Posterior cingulate gyrus (tissue), 11 donors: ENCODE measurements at regions of chr10 and their contacts with region 1.

Region 1: DNA sequence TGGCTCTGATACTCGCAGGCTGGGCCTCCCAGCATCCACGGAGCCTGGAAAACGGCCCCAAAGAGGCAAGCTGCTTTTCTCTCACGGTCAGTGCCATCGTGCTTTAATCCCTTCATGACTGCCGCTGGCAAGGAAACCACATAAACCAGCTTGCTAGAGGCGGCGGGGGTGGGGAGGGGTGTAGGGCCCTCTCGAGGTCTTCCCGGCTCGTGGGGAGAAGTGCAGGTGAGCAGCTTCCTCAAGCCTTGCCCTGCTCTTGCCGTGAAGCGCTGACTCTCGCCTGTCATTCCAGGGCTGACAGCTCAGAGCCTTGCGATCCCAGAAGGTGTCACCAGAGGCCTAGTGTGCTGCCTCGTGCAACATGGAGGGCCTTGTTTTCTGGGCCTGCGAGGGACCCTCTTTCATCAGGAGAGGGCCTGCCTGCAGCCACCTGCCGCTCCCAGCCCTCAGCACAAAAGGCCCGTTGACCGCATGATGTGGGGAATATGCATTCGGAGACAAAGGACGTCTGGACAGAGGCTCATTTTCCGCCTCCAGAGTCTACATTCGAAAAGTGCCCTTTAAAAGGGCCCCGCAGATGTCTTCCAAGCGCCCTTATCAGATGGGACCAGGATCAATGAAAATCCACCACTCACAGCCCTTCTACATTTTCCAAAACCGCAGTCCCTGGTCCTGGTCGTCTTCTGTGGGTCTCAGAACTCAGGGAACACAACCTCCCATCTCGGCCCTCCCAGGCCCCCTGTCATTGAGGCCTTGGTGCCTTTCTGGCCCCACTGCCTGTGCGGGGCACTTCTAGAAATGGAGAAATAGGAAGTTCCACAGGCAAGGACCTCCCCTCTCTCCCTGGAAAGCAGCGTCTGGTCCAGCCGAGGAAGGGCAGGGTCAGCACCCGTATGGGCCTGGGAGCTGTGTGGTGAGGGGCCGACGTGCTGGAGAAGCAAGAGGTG is 58.7 kb downstream of the ZRANB1 start:
- DNase-seq: peak in 8 of 10 donors; percentile 36 to 93 (median 64)

Region 2: DNA sequence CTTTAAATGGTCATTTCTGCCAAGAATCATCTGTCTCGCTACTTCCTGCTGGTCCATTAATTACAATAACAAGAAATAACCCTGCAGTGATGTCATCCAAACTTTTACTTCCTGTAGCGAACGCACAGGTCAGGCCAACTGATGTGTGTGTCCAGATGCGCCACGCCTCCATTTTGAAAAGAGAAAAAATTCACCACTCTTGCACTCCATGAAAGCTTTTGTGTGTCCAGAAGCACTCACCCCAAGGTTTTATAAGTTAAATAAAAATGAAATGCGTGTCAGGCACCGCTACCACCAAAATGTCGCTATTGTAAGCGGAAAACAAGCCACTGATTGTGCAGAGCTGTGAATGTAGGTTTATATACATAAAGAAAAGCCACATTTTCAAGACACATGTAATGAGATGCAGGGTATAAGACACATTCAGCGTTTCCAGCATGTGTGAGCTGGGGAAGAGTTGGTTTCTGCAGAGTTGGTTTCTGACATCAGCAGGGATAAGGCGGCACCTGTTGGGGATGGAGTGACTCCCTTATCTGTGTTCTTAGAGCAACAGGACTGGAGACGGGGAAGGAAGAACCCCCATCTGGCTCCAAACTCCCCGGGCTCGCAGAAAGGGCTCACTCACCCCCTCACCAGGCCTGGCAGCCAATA is 76.4 kb after region 1 on chr10:
- intact Hi-C with region 1: no loop called
- DNase-seq: peak in 1 of 10 donors; percentile 39

Region 3: DNA sequence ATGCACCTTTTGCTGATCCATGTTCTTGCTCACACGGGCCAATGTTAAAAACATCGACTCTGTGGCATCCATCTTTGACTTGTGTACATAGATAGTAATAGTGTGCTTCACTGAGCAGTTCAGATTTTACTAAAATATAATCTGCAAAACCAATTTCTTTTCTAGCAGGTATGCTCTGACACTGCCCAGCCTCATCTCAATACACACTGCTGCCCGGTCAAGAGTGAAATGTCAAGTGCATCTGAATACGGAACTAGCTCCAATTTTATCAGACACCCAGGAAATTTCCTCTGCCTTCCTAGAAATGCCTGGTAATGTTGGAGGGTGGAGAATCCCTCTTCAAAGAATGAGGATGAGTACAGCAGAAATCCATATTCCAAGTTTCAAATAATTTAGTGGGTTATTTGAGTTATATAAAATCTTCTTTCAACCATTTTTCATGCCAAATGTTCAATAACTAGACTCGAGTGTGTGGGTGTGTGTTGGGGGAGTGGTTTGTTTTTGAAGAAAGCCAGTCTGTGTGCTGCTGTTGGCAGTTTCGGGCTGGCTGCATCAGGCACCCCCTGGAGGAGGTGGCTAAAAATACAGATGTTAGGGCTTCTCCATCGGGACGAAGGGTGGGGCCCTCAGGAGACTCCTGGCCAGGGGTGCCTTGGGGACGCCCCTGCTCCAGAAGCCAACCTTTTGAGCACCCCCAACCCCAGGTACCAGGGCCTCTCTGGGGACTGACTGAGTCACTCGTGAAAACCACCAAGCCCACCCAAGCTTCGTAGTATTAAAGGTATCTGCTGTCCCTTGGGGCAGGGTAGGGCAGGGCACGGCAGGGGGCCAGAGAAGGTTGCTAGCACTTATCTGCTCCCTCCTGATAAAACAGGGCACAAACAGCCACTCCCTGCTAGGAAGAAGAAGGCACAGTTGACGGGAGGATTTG is 144.3 kb after region 1 on chr10:
- intact Hi-C with region 1: loop called (anchors 5 kb)
- DNase-seq: peak in 2 of 10 donors; percentile 48 to 89